Activated CD4-positive, alpha-beta memory T cell treated with anti-CD3 and anti-CD28 coated beads for 36 hours (primary cell): ENCODE measurements at regions of chr3 and their contacts with region 1.

Region 1: GRCh38 chr3:66378256-66378823 is 122.5 kb downstream of the LRIG1 start:
- DNase-seq: peak; percentile 62
- H3K4me3 Mint-ChIP-seq: no peak overlapping the region
- H3K27ac Mint-ChIP-seq: peak overlapping the region; percentile 83
- H3K4me1 Mint-ChIP-seq: peaks cover 11% of the 10 kb centered on the region
- H3K27me3 Mint-ChIP-seq: no peaks in the 10 kb centered on the region

Region 2: DNA sequence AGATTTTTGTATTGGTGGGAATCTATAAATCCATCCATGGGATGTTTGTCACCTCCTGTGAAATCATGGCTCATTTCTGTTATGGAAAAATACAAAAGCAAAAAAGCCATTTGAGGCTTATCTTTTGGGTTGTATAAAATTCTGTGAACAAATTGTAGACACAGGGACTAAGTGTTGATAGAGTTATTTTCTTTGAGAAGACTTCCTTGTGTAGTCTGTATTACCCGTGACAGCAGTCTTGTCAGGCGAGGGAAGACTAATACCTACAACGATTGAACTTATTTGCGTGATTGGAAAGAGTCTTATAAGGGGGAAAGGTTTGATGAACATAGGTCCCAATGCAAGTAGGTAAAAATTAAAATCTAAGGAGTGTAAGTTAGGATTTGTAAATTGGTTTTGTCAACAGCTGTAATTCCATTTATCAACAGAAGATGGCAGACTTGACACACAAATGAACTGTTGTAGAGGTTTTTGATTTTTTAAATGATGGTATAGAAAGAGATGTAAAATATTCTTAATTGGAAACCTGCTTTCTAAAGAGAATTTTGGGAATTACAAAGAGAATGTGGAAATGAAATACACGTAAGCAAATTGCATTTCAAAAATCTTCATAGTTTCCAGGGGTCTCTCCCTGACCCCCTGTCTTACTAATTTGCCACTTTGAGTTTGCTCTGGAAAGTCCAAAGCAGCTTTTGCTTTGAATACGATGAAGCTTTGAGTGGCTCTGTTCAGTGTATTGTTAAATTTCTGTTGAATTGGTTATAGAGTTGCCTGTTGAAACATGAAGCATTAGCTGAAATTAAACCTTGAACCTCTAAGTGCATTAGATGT is 124.3 kb before region 1 on chr3:
- CTCF ChIA-PET with region 1: interaction called, 20 read pairs
- POLR2A ChIA-PET with region 1: no interaction called
- intact Hi-C with region 1: no loop called
- DNase-seq: no peak
- H3K4me3 Mint-ChIP-seq: no peak overlapping the region
- H3K27ac Mint-ChIP-seq: no peak overlapping the region
- H3K4me1 Mint-ChIP-seq: peaks cover 6% of the 10 kb centered on the region
- H3K27me3 Mint-ChIP-seq: no peaks in the 10 kb centered on the region

Region 3: GRCh38 chr3:66302288-66302687 is 76.1 kb before region 1 on chr3:
- CTCF ChIA-PET with region 1: interaction called, 13 read pairs
- POLR2A ChIA-PET with region 1: no interaction called
- intact Hi-C with region 1: loop called (anchors 2 kb)
- DNase-seq: peak; percentile 62
- H3K4me3 Mint-ChIP-seq: peak overlapping the region; percentile 23
- H3K27ac Mint-ChIP-seq: peak overlapping the region; percentile 98
- H3K4me1 Mint-ChIP-seq: peaks cover 72% of the 10 kb centered on the region
- H3K27me3 Mint-ChIP-seq: no peaks in the 10 kb centered on the region

Region 4: GRCh38 chr3:66353530-66353929 is 24.8 kb before region 1 on chr3:
- CTCF ChIA-PET with region 1: interaction called, 26 read pairs
- POLR2A ChIA-PET with region 1: no interaction called
- intact Hi-C with region 1: no loop called
- DNase-seq: no peak
- H3K4me3 Mint-ChIP-seq: no peak overlapping the region
- H3K27ac Mint-ChIP-seq: no peak overlapping the region
- H3K4me1 Mint-ChIP-seq: peaks cover 10% of the 10 kb centered on the region
- H3K27me3 Mint-ChIP-seq: no peaks in the 10 kb centered on the region

Region 5: DNA sequence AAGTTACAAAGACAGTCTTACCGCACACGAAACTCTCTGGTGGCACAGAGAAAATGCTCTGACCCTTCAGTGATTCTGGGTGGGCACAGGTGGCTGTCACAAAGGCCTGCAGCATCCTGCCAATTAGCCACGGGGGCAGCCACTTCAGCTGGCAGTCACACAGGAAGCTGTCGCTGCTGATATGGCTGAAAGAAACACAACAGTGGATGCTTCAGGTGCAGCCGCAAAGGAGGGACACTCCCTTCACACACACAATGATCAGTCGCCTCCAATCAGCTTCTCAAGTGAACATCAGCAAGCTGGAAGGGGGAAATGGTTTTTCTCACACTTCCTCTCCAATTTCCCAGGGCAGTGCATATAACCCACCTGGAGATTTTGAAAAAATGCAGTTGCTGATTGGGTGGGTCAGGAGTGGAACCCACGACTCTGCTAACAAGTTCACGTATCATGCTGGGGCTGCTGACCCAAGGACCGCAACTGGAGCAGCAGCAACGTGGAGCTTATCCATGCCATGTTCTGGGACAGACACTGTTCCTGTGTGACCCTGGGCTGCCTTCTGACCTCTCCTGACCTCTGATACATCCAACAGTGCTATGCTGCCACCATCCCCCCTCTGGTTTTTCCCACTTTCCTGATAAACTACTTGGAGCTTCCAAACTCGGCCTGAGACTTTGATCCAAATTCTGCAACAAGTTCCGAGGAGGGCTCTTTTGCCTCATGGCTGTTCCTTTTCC is 15.8 kb after region 1 on chr3:
- CTCF ChIA-PET with region 1: interaction called, 29 read pairs
- POLR2A ChIA-PET with region 1: no interaction called
- intact Hi-C with region 1: no loop called
- DNase-seq: peak; percentile 74
- H3K4me3 Mint-ChIP-seq: peak overlapping the region; percentile 73
- H3K27ac Mint-ChIP-seq: peak overlapping the region; percentile 93
- H3K4me1 Mint-ChIP-seq: peaks cover 57% of the 10 kb centered on the region
- H3K27me3 Mint-ChIP-seq: no peaks in the 10 kb centered on the region

Region 6: GRCh38 chr3:66439666-66440344 is 61.5 kb after region 1 on chr3:
- CTCF ChIA-PET with region 1: no interaction called
- POLR2A ChIA-PET with region 1: no interaction called
- intact Hi-C with region 1: no loop called
- DNase-seq: no peak
- H3K4me3 Mint-ChIP-seq: no peak overlapping the region
- H3K27ac Mint-ChIP-seq: no peak overlapping the region
- H3K4me1 Mint-ChIP-seq: peaks cover 31% of the 10 kb centered on the region
- H3K27me3 Mint-ChIP-seq: no peaks in the 10 kb centered on the region

Region 7: DNA sequence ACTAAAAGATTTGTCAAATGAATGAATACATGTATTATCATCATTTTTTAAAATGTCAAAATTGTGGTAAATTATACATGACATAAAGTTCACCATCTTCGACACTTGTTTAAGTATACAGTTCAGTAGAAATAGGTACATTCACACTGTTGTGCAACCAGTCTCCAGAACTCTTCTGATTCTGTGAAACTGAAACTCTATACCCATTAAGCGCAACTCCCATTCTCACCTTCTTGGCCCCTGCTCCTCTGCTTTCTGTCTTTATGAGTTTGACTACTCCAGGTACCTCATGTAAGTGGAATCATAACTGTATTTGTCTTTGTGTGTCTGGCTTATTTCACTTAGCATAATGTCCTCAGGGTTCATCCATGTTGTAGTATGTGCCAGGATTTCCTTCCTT is 569.7 kb after region 1 on chr3:
- CTCF ChIA-PET with region 1: no interaction called
- POLR2A ChIA-PET with region 1: no interaction called
- intact Hi-C with region 1: no loop called
- DNase-seq: no peak
- H3K4me3 Mint-ChIP-seq: no peak overlapping the region
- H3K27ac Mint-ChIP-seq: no peak overlapping the region
- H3K4me1 Mint-ChIP-seq: no peaks in the 10 kb centered on the region
- H3K27me3 Mint-ChIP-seq: peaks cover 4% of the 10 kb centered on the region

Region 8: DNA sequence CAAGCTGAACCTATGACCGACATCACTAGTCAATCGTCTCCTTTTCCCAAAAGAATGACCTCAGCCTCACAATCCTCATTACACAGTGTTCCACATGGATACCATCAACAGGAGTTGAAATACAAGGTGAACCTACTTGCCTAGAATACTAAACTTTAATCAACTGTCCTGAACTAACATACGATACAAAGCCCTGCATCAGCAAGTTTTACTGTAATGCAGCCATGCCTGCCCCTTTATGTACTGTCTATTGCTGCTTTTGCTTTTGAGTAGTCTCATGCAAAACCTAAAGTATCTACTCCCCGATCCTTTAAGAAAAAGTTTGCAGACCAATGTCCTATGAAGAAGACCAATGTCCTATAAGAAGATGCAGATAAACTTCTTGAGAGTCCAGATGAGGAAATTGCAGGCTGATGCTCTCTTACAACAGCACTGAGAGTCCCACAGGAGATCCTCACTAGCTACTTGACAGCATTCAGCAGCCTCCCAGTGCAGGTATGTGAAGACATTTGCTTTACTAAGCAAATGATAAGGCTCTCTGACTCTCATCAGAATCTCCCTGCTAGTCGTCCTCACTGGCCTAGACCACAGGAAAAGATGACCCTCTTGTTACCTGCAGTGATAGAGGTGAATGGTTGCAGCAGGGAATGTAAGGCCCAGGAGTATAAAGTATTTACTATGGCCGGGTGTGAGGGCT is 1252.5 kb after region 1 on chr3:
- CTCF ChIA-PET with region 1: no interaction called
- POLR2A ChIA-PET with region 1: no interaction called
- intact Hi-C with region 1: no loop called
- DNase-seq: no peak
- H3K4me3 Mint-ChIP-seq: no peak overlapping the region
- H3K27ac Mint-ChIP-seq: no peak overlapping the region
- H3K4me1 Mint-ChIP-seq: peaks cover 50% of the 10 kb centered on the region
- H3K27me3 Mint-ChIP-seq: no peaks in the 10 kb centered on the region